ENCODE measurements at regions of chr11 and their contacts with region 1.

Region 1: DNA sequence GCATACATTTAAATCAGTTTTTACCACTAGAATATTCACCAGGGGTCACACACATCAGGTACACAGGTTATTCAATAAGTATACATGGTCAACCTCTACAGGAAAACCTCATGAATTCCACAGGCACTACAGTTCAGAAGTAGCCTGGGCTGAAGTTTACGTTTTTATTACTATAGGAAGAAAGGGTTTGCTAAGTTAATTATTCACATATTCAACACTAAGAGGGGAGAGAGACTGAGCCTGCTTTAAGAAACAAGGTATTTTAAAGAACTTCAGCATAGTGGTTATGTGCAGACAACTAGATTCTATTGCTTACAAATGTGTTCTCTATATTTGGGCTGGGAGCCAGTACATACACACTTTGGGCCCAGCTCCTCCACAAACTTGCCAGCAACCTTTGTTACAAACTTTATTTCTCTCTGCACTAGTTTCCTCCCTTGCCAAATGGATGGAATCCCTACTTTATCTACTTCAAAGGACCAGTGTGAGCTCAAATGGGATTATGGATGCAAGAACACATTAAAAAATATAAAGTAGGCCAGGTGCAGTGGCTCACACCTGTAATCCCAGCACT is 31.9 kb downstream of the IL18BP start:
- DNase-seq: no peak
- ATAC-seq: no peak
- H3K4me3 ChIP-seq: no peak overlapping the region
- H3K4me3 Mint-ChIP-seq: no peak overlapping the region
- H3K27ac ChIP-seq: peak overlapping the region in 1 of 2 donors; percentile 52
- H3K27ac Mint-ChIP-seq: peak overlapping the region; percentile 11
- H3K4me1 ChIP-seq: peaks cover 0 to 2% of the 10 kb centered on the region in 2 donors
- H3K4me1 Mint-ChIP-seq: peaks cover 35% of the 10 kb centered on the region
- H3K27me3 ChIP-seq: no peaks in the 10 kb centered on the region
- H3K27me3 Mint-ChIP-seq: no peaks in the 10 kb centered on the region
- CTCF ChIP-seq: no peak

Region 2: GRCh38 chr11:71383461-71383860 is 647.1 kb before region 1 on chr11:
- CTCF ChIA-PET with region 1: no interaction called
- POLR2A ChIA-PET with region 1: no interaction called
- intact Hi-C with region 1: no loop called
- DNase-seq: peak; percentile 76
- ATAC-seq: peak; percentile 71
- H3K4me3 ChIP-seq: no peak overlapping the region
- H3K4me3 Mint-ChIP-seq: peak overlapping the region; percentile 56
- H3K27ac ChIP-seq: peak overlapping the region in 1 of 2 donors; percentile 64
- H3K27ac Mint-ChIP-seq: peak overlapping the region; percentile 68
- H3K4me1 ChIP-seq: peaks cover 71 to 72% of the 10 kb centered on the region in 2 donors
- H3K4me1 Mint-ChIP-seq: peaks cover 65% of the 10 kb centered on the region
- H3K27me3 ChIP-seq: no peaks in the 10 kb centered on the region
- H3K27me3 Mint-ChIP-seq: peaks cover 6% of the 10 kb centered on the region
- CTCF ChIP-seq: no peak

Region 3: DNA sequence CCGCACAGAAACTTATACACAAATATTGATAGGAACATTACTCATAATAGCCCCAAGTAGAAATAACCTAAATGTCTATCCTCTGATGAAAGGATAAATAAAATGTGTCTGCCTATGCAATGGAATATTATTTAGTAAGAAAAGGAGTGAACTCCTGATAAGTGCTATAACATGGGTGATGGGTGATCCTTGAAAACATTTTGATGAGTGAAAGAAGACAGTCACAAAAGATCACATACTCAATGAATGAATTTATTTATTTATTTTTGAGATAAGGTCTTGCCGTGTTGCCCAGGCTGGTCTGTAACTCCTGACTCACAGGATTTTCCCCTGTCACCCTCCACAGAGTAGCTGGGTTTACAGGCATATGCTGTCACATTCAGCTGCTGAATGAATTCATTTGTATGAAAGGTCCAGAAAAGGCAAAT is 84.4 kb before region 1 on chr11:
- CTCF ChIA-PET with region 1: no interaction called
- POLR2A ChIA-PET with region 1: no interaction called
- intact Hi-C with region 1: no loop called
- DNase-seq: no peak
- ATAC-seq: no peak
- H3K4me3 ChIP-seq: no peak overlapping the region
- H3K4me3 Mint-ChIP-seq: no peak overlapping the region
- H3K27ac ChIP-seq: no peak overlapping the region
- H3K27ac Mint-ChIP-seq: no peak overlapping the region
- H3K4me1 ChIP-seq: peaks cover 12 to 13% of the 10 kb centered on the region in 2 donors
- H3K4me1 Mint-ChIP-seq: peaks cover 36% of the 10 kb centered on the region
- H3K27me3 ChIP-seq: no peaks in the 10 kb centered on the region
- H3K27me3 Mint-ChIP-seq: no peaks in the 10 kb centered on the region
- CTCF ChIP-seq: no peak

Region 4: GRCh38 chr11:71977743-71978418 is 52.7 kb before region 1 on chr11:
- CTCF ChIA-PET with region 1: interaction called, 52 read pairs
- POLR2A ChIA-PET with region 1: no interaction called
- intact Hi-C with region 1: loop called (anchors 1 kb)
- DNase-seq: peak; percentile 86
- ATAC-seq: peak; percentile 96
- H3K4me3 ChIP-seq: no peak overlapping the region
- H3K4me3 Mint-ChIP-seq: peak overlapping the region; percentile 38
- H3K27ac ChIP-seq: peak overlapping the region; percentile 64 to 72
- H3K27ac Mint-ChIP-seq: peak overlapping the region; percentile 93
- H3K4me1 ChIP-seq: peaks cover 17 to 25% of the 10 kb centered on the region in 2 donors
- H3K4me1 Mint-ChIP-seq: peaks cover 25% of the 10 kb centered on the region
- H3K27me3 ChIP-seq: no peaks in the 10 kb centered on the region
- H3K27me3 Mint-ChIP-seq: no peaks in the 10 kb centered on the region
- CTCF ChIP-seq: peak; percentile 82

Region 5: DNA sequence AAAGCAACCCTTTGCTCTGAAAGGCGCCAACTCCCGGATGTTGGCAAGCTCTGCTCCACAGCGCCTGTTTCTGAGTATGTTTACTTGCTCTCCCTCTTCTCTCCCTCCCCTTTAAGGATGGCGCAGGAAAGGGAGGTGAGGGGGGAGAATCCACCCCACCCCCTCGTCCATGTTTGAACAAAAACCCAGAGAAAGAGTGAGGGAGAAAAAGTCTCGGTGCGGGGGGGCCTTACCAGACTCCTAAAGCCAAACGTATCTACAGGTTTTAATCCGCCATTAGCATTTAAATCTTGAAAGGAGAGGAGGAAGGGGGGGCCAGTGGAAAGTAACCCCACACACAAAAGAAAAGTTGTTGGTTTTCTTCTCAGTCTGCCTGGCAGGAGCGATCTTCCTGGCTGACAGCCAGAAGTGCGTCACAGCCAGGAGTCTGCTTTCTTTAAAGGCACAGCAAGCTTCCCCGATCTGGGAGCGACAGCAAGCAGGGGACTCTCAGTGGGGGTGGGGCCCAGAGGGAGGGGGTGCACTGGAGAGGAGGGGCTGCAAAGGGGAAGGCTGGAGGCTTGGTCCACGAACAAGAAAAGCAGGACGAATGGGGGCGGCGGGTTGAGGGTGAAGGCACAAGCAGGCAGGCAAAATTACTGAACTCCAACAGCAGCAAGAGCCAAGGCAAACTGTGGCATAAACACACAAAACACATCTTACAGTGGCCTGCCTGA is 10.3 kb after region 1 on chr11:
- CTCF ChIA-PET with region 1: interaction called, 117 read pairs
- POLR2A ChIA-PET with region 1: interaction called, 8 read pairs
- intact Hi-C with region 1: loop called (anchors 1 kb)
- DNase-seq: peak; percentile 73
- ATAC-seq: peak; percentile 50
- H3K4me3 ChIP-seq: peak overlapping the region; percentile 72 to 86 (median 83)
- H3K4me3 Mint-ChIP-seq: no peak overlapping the region
- H3K27ac ChIP-seq: peak overlapping the region; percentile 72 to 92
- H3K27ac Mint-ChIP-seq: no peak overlapping the region
- H3K4me1 ChIP-seq: peaks cover 45 to 54% of the 10 kb centered on the region in 2 donors
- H3K4me1 Mint-ChIP-seq: peaks cover 30% of the 10 kb centered on the region
- H3K27me3 ChIP-seq: no peaks in the 10 kb centered on the region
- H3K27me3 Mint-ChIP-seq: no peaks in the 10 kb centered on the region
- CTCF ChIP-seq: no peak

Region 6: GRCh38 chr11:72085621-72086351 is 55.2 kb after region 1 on chr11:
- CTCF ChIA-PET with region 1: interaction called, 292 read pairs
- POLR2A ChIA-PET with region 1: no interaction called
- intact Hi-C with region 1: no loop called
- DNase-seq: no peak
- ATAC-seq: no peak
- H3K4me3 ChIP-seq: no peak overlapping the region
- H3K4me3 Mint-ChIP-seq: no peak overlapping the region
- H3K27ac ChIP-seq: no peak overlapping the region
- H3K27ac Mint-ChIP-seq: no peak overlapping the region
- H3K4me1 ChIP-seq: peaks cover 5 to 18% of the 10 kb centered on the region in 2 donors
- H3K4me1 Mint-ChIP-seq: peaks cover 13% of the 10 kb centered on the region
- H3K27me3 ChIP-seq: no peaks in the 10 kb centered on the region
- H3K27me3 Mint-ChIP-seq: no peaks in the 10 kb centered on the region
- CTCF ChIP-seq: no peak

Region 7: DNA sequence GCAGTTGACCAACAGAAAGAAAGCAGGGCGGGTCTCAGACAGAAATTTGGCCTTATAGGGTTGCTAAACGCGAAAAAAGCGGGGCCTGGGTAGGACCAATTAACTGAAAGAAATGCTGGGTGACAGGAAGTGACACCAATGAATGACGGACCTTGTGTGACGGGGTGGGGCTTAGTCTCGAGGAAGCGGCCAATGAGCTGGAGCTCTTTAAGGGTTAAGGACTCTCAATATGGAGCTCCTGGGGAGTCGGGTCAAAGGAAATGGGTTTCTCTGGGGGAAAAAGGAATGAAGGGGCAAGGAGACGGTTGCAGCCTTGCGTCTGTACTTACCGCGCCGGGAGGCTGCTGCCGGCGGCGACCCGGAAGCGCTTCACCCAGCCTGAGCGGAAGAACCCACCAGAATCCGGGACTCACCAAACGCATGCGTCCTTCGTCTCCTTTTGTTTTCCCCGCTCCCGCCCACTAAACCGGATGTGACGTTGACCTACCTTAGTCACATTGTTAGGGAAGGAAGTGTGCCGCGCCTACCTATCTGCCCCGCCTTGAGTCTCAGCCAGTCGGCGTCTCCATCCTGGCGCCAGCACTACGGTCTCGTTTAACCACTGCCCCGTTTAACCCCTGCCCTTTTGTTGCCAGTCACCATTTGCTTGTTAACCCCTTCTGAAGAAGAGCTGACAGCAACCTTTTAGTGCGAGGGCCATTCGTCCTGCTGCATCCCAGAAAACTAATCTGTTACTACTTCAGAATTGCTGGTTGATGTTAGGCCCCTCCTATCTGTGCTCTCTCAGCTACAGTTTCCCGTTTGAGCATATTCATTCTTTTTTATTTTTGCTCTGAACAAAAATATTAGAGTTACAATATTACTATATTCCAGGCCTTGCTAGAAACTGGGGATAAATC is 82.0 kb after region 1 on chr11 and contains the start of gene ANAPC15:
- CTCF ChIA-PET with region 1: interaction called, 10 read pairs
- POLR2A ChIA-PET with region 1: no interaction called
- intact Hi-C with region 1: loop called (anchors 1 kb)
- DNase-seq: peak; percentile 99
- ATAC-seq: peak; percentile 89
- H3K4me3 ChIP-seq: peak within 1 kb of the TSS; percentile 67 to 94 (median 78)
- H3K4me3 Mint-ChIP-seq: peak within 1 kb of the TSS; percentile 93
- H3K27ac ChIP-seq: peak within 1 kb of the TSS; percentile 95
- H3K27ac Mint-ChIP-seq: peak within 1 kb of the TSS; percentile 98
- H3K4me1 ChIP-seq: peaks cover 14 to 19% of the 10 kb centered on the region in 2 donors
- H3K4me1 Mint-ChIP-seq: peaks cover 20% of the 10 kb centered on the region
- H3K27me3 ChIP-seq: peaks cover 0 to 12% (median 0%) of the 10 kb centered on the region in 4 experiments
- H3K27me3 Mint-ChIP-seq: peaks cover 14% of the 10 kb centered on the region
- CTCF ChIP-seq: no peak
- total RNA-seq, gene ANAPC15: 27.1 and 29.2 TPM in 2 replicates

Region 8: DNA sequence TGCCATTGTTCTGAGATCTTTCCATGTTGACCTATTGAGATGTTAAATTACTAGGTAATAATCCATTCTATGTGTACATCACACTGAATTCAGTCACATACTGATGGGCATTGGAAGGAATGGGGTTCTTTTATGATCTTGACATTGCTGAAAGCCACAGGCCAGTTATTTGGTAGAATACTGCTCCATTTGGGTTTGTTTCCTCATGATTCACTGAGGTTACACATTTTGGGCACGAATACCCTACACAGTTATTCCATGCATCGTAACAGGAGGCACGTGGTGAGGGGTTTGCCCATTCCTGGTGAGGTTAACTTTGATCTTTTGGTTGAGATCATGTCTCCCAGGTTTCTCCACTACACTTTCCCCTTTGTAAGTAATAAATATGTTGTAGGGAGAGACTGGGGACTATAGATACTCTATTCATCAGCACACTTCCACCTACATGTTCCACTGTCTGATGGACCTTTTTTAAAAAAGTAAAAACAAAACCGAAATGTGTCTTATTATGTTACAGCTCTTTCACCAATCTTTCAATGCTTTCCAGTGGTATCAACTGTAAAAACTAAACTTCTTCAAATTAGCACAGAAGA is 149.3 kb after region 1 on chr11:
- CTCF ChIA-PET with region 1: interaction called, 12 read pairs
- POLR2A ChIA-PET with region 1: no interaction called
- intact Hi-C with region 1: loop called (anchors 1 kb)
- DNase-seq: no peak
- ATAC-seq: no peak
- H3K4me3 ChIP-seq: no peak overlapping the region
- H3K4me3 Mint-ChIP-seq: no peak overlapping the region
- H3K27ac ChIP-seq: no peak overlapping the region
- H3K27ac Mint-ChIP-seq: no peak overlapping the region
- H3K4me1 ChIP-seq: no peaks in the 10 kb centered on the region
- H3K4me1 Mint-ChIP-seq: peaks cover 1% of the 10 kb centered on the region
- H3K27me3 ChIP-seq: peaks cover 0 to 16% (median 1%) of the 10 kb centered on the region in 4 experiments
- H3K27me3 Mint-ChIP-seq: peaks cover 25% of the 10 kb centered on the region
- CTCF ChIP-seq: no peak

Measured in B cell (primary cell).